SK-N-SH (cell line): ENCODE measurements at regions of chr1 and their contacts with region 1.

Region 1: DNA sequence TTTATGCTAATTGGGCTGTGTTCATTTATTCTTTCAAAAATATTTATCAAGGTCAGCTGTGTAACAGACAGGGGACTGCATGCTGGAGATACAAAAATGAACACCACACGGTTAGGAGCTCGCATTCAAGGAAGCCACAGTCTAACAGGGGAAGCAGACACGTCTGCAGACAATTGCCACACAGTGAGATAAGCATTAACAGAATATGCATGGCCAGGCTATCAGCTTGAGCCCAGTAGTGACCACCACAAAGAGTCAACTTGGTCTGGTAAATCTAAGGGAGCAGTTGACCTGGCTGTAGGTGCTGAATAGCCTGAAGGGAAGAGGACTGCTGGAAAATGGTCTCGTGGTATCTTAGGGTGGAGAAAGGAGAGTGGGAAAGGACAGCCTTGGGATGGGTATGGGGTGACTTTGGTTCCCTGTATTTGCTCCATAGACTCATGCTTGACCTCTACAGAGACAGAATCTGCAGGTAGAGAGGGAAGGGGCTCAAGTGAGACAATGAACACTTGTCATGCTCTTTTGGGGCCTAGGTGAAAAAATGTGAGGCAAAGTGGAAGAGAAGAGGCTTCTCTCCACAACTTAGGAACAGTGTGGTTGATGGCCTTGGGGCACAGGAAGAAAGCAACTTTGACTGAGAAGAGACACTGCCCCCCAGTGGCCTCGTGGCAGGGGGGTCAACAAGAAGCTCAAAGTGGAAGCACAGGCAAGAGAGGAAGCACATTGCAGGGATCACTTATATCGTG is 7.6 kb upstream of the NPL start:
- DNase-seq: peak; percentile 45
- H3K4me3 ChIP-seq: no peak overlapping the region; a peak in 1 of 4 replicates
- H3K27ac ChIP-seq: peak overlapping the region in 1 of 2 experiments; percentile 68; a peak in 2 of 4 replicates
- H3K4me1 ChIP-seq: peaks cover 0 to 11% of the 10 kb centered on the region in 2 experiments; a peak in 2 of 4 replicates
- H3K27me3 ChIP-seq: no peaks in the 10 kb centered on the region
- CTCF ChIP-seq: peak; percentile 63
- EP300 ChIP-seq: no peak
- RAD21 ChIP-seq: peak; percentile 83

Region 2: DNA sequence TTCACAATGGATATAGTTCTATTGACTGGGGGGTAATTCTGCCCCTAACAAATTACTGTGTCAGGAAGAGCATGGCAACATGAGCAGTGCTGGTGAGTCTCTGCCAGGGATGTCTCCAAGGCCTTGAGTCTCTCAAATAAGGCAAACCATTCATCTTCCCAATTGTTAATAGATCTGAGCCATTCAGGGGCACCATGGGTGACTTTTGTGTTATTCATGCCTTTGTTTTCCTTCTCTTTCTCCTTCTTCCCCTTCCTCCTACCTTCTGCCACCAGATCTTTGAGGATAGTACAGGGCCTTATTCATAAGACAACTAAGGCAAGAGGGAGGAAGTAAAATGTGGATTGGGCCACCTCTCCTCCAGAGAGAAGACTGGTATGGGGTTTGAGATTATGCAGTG is 331.9 kb before region 1 on chr1 and contains the start of gene RGSL1:
- CTCF ChIA-PET with region 1: interaction called, 18 read pairs
- POLR2A ChIA-PET with region 1: no interaction called
- DNase-seq: no peak
- H3K4me3 ChIP-seq: no peak within 1 kb of the TSS
- H3K27ac ChIP-seq: no peak within 1 kb of the TSS
- H3K4me1 ChIP-seq: no peaks in the 10 kb centered on the region
- H3K27me3 ChIP-seq: no peaks in the 10 kb centered on the region
- CTCF ChIP-seq: no peak
- EP300 ChIP-seq: no peak
- RAD21 ChIP-seq: no peak
- polyA plus RNA-seq, gene RGSL1: not detected in 2 replicates

Region 3: DNA sequence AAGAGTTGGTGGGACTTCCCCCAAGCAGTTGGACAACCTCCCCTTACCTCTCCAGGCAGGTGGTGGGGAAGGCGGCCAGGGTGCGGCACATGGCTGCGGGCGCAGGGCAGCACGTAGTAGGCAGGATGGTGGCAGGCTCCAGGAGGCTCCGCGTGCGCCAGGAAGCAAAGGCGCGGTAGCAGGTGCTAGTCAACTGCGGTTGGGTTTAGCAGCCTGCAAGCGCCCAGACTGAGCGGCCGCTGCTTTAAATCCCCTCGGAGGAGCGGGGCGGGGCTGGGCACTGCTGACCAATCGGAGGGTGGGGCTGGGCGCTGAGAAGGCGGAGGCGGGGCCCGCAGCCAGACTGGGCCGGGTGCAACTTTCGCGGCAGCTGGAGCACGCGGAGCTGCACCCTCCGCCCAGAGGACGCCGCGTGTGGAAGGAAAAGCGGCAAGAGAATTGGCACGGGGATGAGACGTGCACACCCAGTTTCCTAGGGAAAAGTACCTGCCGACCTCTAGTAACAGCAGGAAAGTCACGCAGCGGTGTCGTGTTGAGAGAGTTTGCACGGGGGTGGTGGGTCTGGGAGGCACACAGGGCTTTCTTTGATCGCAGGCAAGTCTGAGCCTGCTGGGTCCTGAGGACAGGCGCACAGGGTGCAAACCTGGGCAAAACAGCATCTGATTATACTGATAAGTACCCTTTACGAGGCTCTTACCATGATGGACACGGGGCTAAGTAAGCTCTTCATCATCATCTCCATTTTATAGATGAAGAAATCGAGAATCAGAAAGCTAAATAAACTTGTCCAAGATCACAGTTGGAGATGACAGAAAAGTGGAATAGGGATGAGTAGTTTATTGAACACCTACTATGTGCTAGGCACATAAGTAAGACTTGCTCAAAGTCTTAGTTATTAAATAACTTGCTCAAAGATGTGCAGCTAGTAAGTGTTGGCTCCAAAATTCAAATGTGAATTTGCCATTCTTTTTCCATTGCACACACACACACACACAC is 177.5 kb before region 1 on chr1 and contains the start of gene RGS16:
- CTCF ChIA-PET with region 1: interaction called, 829 read pairs
- POLR2A ChIA-PET with region 1: interaction called, 9 read pairs
- DNase-seq: peak; percentile 98
- H3K4me3 ChIP-seq: peak within 1 kb of the TSS; percentile 57 to 67
- H3K27ac ChIP-seq: peak within 1 kb of the TSS in 1 of 2 experiments; percentile 63; a peak in 2 of 4 replicates
- H3K4me1 ChIP-seq: peaks cover 0 to 29% of the 10 kb centered on the region in 2 experiments; a peak in 1 of 4 replicates
- H3K27me3 ChIP-seq: no peaks in the 10 kb centered on the region
- CTCF ChIP-seq: no peak
- EP300 ChIP-seq: no peak
- RAD21 ChIP-seq: no peak
- polyA plus RNA-seq, gene RGS16: 0.79 and 1.7 TPM in 2 replicates

Region 4: GRCh38 chr1:182633672-182634176 is 148.3 kb before region 1 on chr1:
- CTCF ChIA-PET with region 1: interaction called, 14 read pairs
- POLR2A ChIA-PET with region 1: no interaction called
- DNase-seq: peak; percentile 52
- H3K4me3 ChIP-seq: no peak overlapping the region
- H3K27ac ChIP-seq: peak overlapping the region in 1 of 2 experiments; percentile 44; a peak in 2 of 4 replicates
- H3K4me1 ChIP-seq: peaks cover 0 to 31% of the 10 kb centered on the region in 2 experiments; a peak in 1 of 4 replicates
- H3K27me3 ChIP-seq: no peaks in the 10 kb centered on the region; the same call in 1 of the 2 replicates
- CTCF ChIP-seq: no peak
- EP300 ChIP-seq: peak in 1 of 2 experiments; percentile 83; a peak in 1 of 4 replicates
- RAD21 ChIP-seq: peak; percentile 14; the same call in 1 of the 2 replicates

Region 5: DNA sequence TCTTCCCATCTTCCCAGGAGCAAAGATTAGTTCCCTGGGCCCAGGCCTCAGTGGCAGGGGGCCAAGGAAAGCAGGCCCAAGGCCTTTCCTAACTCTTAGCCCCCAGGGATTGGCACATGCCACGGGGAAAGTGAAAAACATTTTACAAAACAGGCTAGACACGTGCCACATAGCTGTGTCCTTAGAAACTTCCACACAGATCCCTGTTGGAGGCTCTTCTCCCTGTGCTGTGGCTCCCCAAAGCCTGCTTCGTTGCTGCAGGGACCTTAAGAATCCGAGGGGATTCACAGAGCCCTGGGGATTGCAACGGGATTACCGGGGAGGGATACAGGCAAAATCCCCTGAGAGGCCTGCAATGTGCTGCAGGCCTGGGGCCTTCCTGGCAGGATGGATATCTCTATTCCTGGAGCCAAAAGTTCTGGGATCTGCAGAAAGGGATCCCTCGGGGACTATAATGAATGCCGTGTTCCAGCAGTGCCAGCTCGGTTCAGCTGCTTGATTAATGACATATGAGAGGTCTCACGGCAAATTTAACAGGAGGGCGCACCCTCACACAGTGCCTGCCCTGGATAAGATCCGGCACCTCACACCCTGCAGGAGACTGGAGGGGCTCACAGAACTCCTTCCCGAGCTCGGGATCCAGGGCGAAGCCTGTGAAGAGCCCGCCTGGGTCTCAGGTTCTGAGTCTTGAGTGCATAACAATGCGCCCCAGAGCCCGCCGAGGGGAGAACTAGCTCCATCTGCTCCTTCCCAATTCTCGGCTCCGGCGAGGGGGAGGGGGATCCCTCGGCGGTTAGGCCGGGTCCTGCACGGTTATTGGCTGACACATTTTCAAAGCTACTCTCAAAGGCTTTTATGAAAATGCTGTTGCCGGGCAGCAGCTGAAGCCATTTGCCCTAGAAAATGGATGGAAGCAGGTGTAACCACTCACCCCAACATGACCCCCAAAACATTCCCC is 82.3 kb before region 1 on chr1:
- CTCF ChIA-PET with region 1: interaction called, 10 read pairs
- POLR2A ChIA-PET with region 1: interaction called, 3 read pairs
- DNase-seq: no peak
- H3K4me3 ChIP-seq: no peak overlapping the region
- H3K27ac ChIP-seq: peak overlapping the region in 1 of 2 experiments; percentile 11; a peak in 1 of 4 replicates
- H3K4me1 ChIP-seq: peaks cover 0 to 22% of the 10 kb centered on the region in 2 experiments; a peak in 2 of 4 replicates
- H3K27me3 ChIP-seq: no peaks in the 10 kb centered on the region; the same call in 1 of the 2 replicates
- CTCF ChIP-seq: no peak
- EP300 ChIP-seq: no peak
- RAD21 ChIP-seq: no peak

Region 6: GRCh38 chr1:182768963-182769362 is 13.1 kb before region 1 on chr1:
- CTCF ChIA-PET with region 1: interaction called, 52 read pairs
- POLR2A ChIA-PET with region 1: no interaction called
- DNase-seq: no peak
- H3K4me3 ChIP-seq: no peak overlapping the region
- H3K27ac ChIP-seq: no peak overlapping the region
- H3K4me1 ChIP-seq: peaks cover 0 to 18% of the 10 kb centered on the region in 2 experiments; a peak in 2 of 4 replicates
- H3K27me3 ChIP-seq: no peaks in the 10 kb centered on the region
- CTCF ChIP-seq: no peak
- EP300 ChIP-seq: no peak
- RAD21 ChIP-seq: no peak